ENCODE measurements at regions of chr1 and their contacts with region 1.

Region 1: GRCh38 chr1:63615768-63616420 is 22.7 kb downstream of the PGM1 start:
- DNase-seq: peak; percentile 50 to 74
- ATAC-seq: peak; percentile 27 to 38
- H3K4me3 ChIP-seq: no peak overlapping the region
- H3K27ac ChIP-seq: peak overlapping the region; percentile 91 to 99 (median 96)
- H3K4me1 ChIP-seq: peaks cover 78 to 94% of the 10 kb centered on the region in 2 donors
- H3K27me3 ChIP-seq: no peaks in the 10 kb centered on the region
- CTCF ChIP-seq: peak; percentile 73 to 86 (median 84)
- POLR2A ChIP-seq: no peak

Region 2: DNA sequence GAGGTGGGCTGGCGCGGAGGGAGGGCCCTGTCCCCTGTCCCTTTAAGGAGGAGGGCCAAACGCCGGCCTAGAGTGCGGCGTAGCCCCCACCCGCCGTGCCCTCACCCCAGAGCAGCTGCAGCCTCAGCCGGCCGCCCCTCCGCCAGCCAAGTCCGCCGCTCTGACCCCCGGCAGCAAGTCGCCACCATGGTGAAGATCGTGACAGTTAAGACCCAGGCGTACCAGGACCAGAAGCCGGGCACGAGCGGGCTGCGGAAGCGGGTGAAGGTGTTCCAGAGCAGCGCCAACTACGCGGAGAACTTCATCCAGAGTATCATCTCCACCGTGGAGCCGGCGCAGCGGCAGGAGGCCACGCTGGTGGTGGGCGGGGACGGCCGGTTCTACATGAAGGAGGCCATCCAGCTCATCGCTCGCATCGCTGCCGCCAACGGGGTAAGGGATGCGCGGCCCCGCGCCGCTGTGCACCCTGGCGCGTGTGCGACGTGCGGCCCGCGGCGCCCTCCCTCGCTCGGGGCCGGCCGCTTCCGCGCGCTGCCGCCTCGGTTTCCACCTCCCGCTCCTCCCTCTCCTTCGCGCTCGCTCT is 22.5 kb before region 1 on chr1 and contains the start of gene PGM1:
- in situ Hi-C with region 1: no loop called
- intact Hi-C with region 1: loop called (anchors 1 kb)
- DNase-seq: peak; percentile 51 to 86
- ATAC-seq: peak; percentile 57 to 63
- H3K4me3 ChIP-seq: peak within 1 kb of the TSS; percentile 74 to 85 (median 78)
- H3K27ac ChIP-seq: peak within 1 kb of the TSS; percentile 91 to 99 (median 96)
- H3K4me1 ChIP-seq: peaks cover 47 to 57% of the 10 kb centered on the region in 2 donors
- H3K27me3 ChIP-seq: no peaks in the 10 kb centered on the region
- CTCF ChIP-seq: no peak
- POLR2A ChIP-seq: peak; percentile 60 to 76
- total RNA-seq, gene PGM1: 320 to 713 (median 666) TPM

Region 3: GRCh38 chr1:63920154-63921117 is 304.5 kb after region 1 on chr1:
- in situ Hi-C with region 1: no loop called
- intact Hi-C with region 1: loop called (anchors 10 kb)
- DNase-seq: no peak
- ATAC-seq: no peak
- H3K4me3 ChIP-seq: no peak overlapping the region
- H3K27ac ChIP-seq: no peak overlapping the region
- H3K4me1 ChIP-seq: peaks cover 17% of the 10 kb centered on the region in 2 donors
- H3K27me3 ChIP-seq: no peaks in the 10 kb centered on the region
- CTCF ChIP-seq: peak in 1 of 5 experiments; percentile 6
- POLR2A ChIP-seq: no peak

Region 4: GRCh38 chr1:64136752-64137411 is 521.0 kb after region 1 on chr1:
- in situ Hi-C with region 1: loop called in 2 of 4 experiments (anchors 10 kb)
- intact Hi-C with region 1: loop called (anchors 2 kb)
- DNase-seq: peak; percentile 47 to 76
- ATAC-seq: peak; percentile 92 to 94
- H3K4me3 ChIP-seq: no peak overlapping the region
- H3K27ac ChIP-seq: no peak overlapping the region
- H3K4me1 ChIP-seq: no peaks in the 10 kb centered on the region
- H3K27me3 ChIP-seq: no peaks in the 10 kb centered on the region
- CTCF ChIP-seq: peak; percentile 86 to 93 (median 88)
- POLR2A ChIP-seq: no peak

Region 5: GRCh38 chr1:64242895-64243756 is 627.2 kb after region 1 on chr1:
- in situ Hi-C with region 1: loop called in 2 of 4 experiments (anchors 5 to 10 kb)
- intact Hi-C with region 1: loop called (anchors 1 kb)
- DNase-seq: no peak
- ATAC-seq: peak in 1 of 2 donors; percentile 51
- H3K4me3 ChIP-seq: no peak overlapping the region
- H3K27ac ChIP-seq: no peak overlapping the region
- H3K4me1 ChIP-seq: no peaks in the 10 kb centered on the region
- H3K27me3 ChIP-seq: no peaks in the 10 kb centered on the region
- CTCF ChIP-seq: peak in 4 of 5 experiments; percentile 27 to 41 (median 37)
- POLR2A ChIP-seq: no peak

Measured in gastrocnemius medialis (tissue), 4 donors.